A549 (cell line): ENCODE measurements at regions of chr2 and their contacts with region 1.

Region 1: GRCh38 chr2:20661067-20661980 is 5.6 kb upstream of the GDF7 start:
- DNase-seq: peak; percentile 83 to 86
- ATAC-seq: peak; percentile 57 to 79
- H3K4me3 ChIP-seq: no peak overlapping the region
- H3K27ac ChIP-seq: no peak overlapping the region
- H3K4me1 ChIP-seq: peaks cover 13% of the 10 kb centered on the region; the same call in 2 of the 3 replicates
- CTCF ChIP-seq: peak; percentile 97
- EP300 ChIP-seq: no peak
- POLR2A ChIP-seq: no peak
- RAD21 ChIP-seq: peak; percentile 97 to 99

Region 2: GRCh38 chr2:20225294-20226151 is 435.8 kb before region 1 on chr2:
- CTCF ChIA-PET with region 1: no interaction called
- POLR2A ChIA-PET with region 1: no interaction called
- DNase-seq: peak; percentile 84 to 88
- ATAC-seq: peak; percentile 65 to 87
- H3K4me3 ChIP-seq: peak overlapping the region; percentile 95
- H3K27ac ChIP-seq: peak overlapping the region; percentile 96 to 97
- H3K4me1 ChIP-seq: peaks cover 33% of the 10 kb centered on the region
- CTCF ChIP-seq: peak; percentile 93
- EP300 ChIP-seq: no peak
- POLR2A ChIP-seq: no peak
- RAD21 ChIP-seq: peak; percentile 79 to 96

Region 3: GRCh38 chr2:20411361-20411894 is 249.9 kb before region 1 on chr2:
- CTCF ChIA-PET with region 1: interaction called, 10 read pairs
- POLR2A ChIA-PET with region 1: no interaction called
- DNase-seq: peak; percentile 79 to 86
- ATAC-seq: peak; percentile 100
- H3K4me3 ChIP-seq: no peak overlapping the region
- H3K27ac ChIP-seq: no peak overlapping the region
- H3K4me1 ChIP-seq: peaks cover 4% of the 10 kb centered on the region; the same call in 1 of the 3 replicates
- CTCF ChIP-seq: peak; percentile 81
- EP300 ChIP-seq: no peak
- POLR2A ChIP-seq: no peak
- RAD21 ChIP-seq: peak; percentile 79 to 86

Region 4: DNA sequence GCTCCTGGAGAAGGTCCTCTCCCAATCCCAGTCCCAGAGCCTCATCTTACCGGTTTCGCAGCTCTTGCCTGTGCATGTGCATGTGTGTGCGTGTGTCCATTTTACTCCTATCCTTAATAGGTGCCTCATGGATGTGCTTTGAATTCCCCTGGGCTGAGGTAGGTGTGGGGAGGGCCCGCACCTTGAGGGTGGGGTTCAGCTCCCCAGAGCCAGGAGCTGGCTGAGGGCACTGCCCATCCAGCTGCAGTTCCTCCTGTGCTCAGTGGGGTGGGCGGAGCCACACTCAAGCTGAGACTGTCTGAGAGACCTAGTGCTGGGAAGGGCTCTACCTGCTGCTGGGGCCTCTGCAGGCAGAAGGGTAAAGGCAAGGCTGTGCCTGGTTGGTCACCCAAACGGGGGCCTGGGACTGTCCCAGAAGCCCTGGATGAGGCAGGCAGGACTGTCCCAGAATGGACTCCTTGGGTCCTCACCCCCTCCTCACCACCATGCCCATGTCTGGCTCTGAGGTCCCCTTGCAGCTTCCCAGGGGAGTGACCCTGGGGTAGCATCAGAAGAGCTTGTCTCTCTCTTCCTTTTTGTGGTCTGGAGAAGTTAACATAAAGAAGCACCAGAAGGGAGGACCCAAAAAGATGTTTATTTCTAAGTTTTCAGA is 14.5 kb after region 1 on chr2:
- CTCF ChIA-PET with region 1: interaction called, 191 read pairs
- POLR2A ChIA-PET with region 1: interaction called, 4 read pairs
- DNase-seq: peak in 1 of 2 experiments; percentile 41
- ATAC-seq: peak; percentile 80 to 89
- H3K4me3 ChIP-seq: no peak overlapping the region
- H3K27ac ChIP-seq: peak overlapping the region; percentile 33 to 55; a peak in 3 of 6 replicates
- H3K4me1 ChIP-seq: peaks cover 21% of the 10 kb centered on the region
- CTCF ChIP-seq: no peak
- EP300 ChIP-seq: no peak
- POLR2A ChIP-seq: no peak
- RAD21 ChIP-seq: no peak

Region 5: DNA sequence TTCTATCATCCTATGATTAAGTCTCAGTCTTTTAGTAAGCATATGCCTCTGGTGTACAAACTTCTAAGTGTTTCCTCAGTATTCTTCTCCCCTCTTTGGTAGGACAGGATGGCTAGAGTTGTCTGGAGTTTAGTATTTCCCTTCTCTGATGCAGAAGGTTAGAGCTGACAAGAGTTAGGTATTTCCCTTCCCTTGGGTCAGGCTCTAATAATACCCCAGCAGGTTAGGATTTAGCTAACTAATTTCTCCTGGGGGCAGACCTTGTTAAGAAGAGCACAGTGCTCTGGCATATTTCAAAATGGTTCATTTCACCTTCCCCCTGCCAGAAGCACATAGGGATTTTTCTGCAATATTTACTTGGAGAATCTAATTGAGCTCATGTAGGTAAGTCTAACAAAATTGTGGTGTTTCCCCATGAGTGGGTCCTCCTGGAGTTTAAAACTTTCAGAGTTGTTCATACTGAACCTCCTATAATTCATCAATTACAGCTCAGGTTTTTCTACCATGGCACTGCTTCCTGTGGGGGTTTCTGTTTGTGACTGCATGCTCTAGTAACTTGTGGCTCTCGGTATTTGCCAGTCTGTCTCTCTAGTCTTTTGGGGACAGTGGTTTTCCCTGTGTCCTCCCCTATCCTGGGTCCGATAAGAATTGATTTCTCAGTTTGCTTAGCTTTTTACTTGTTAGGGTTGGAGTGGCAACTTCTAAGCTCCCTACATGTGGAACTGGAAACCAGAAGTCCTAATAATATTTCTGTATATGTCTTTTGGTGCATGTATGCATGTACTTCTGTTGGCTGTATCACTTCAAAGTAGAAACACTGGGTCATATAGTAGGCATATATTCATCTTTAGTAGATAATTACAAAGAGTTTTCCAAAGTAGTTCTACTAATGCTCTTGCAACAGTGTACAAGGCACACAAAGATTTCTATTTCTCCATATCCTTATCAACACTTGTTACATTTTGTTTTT is 83.3 kb after region 1 on chr2:
- CTCF ChIA-PET with region 1: interaction called, 10 read pairs
- POLR2A ChIA-PET with region 1: no interaction called
- DNase-seq: no peak
- ATAC-seq: no peak
- H3K4me3 ChIP-seq: no peak overlapping the region
- H3K27ac ChIP-seq: no peak overlapping the region; a peak in 1 of 6 replicates
- H3K4me1 ChIP-seq: peaks cover 27% of the 10 kb centered on the region
- CTCF ChIP-seq: no peak
- EP300 ChIP-seq: no peak
- POLR2A ChIP-seq: no peak
- RAD21 ChIP-seq: no peak

Region 6: GRCh38 chr2:20917719-20918572 is 256.6 kb after region 1 on chr2:
- CTCF ChIA-PET with region 1: interaction called, 12 read pairs
- POLR2A ChIA-PET with region 1: no interaction called
- DNase-seq: no peak
- ATAC-seq: no peak
- H3K4me3 ChIP-seq: no peak overlapping the region
- H3K27ac ChIP-seq: no peak overlapping the region
- H3K4me1 ChIP-seq: no peaks in the 10 kb centered on the region
- CTCF ChIP-seq: no peak
- EP300 ChIP-seq: no peak
- POLR2A ChIP-seq: no peak
- RAD21 ChIP-seq: no peak

Region 7: GRCh38 chr2:20976527-20976926 is 315.2 kb after region 1 on chr2:
- CTCF ChIA-PET with region 1: interaction called, 67 read pairs
- POLR2A ChIA-PET with region 1: no interaction called
- DNase-seq: no peak
- ATAC-seq: no peak
- H3K4me3 ChIP-seq: no peak overlapping the region
- H3K27ac ChIP-seq: no peak overlapping the region
- H3K4me1 ChIP-seq: no peaks in the 10 kb centered on the region
- CTCF ChIP-seq: no peak
- EP300 ChIP-seq: no peak
- POLR2A ChIP-seq: no peak
- RAD21 ChIP-seq: no peak

Region 8: GRCh38 chr2:21052044-21052443 is 390.7 kb after region 1 on chr2:
- CTCF ChIA-PET with region 1: interaction called, 10 read pairs
- POLR2A ChIA-PET with region 1: no interaction called
- DNase-seq: no peak
- ATAC-seq: no peak
- H3K4me3 ChIP-seq: no peak overlapping the region
- H3K27ac ChIP-seq: no peak overlapping the region
- H3K4me1 ChIP-seq: no peaks in the 10 kb centered on the region
- CTCF ChIP-seq: no peak
- EP300 ChIP-seq: no peak
- POLR2A ChIP-seq: no peak
- RAD21 ChIP-seq: no peak